Posterior cingulate gyrus (tissue), 11 donors: ENCODE measurements at regions of chr9 and their contacts with region 1.

Region 1: DNA sequence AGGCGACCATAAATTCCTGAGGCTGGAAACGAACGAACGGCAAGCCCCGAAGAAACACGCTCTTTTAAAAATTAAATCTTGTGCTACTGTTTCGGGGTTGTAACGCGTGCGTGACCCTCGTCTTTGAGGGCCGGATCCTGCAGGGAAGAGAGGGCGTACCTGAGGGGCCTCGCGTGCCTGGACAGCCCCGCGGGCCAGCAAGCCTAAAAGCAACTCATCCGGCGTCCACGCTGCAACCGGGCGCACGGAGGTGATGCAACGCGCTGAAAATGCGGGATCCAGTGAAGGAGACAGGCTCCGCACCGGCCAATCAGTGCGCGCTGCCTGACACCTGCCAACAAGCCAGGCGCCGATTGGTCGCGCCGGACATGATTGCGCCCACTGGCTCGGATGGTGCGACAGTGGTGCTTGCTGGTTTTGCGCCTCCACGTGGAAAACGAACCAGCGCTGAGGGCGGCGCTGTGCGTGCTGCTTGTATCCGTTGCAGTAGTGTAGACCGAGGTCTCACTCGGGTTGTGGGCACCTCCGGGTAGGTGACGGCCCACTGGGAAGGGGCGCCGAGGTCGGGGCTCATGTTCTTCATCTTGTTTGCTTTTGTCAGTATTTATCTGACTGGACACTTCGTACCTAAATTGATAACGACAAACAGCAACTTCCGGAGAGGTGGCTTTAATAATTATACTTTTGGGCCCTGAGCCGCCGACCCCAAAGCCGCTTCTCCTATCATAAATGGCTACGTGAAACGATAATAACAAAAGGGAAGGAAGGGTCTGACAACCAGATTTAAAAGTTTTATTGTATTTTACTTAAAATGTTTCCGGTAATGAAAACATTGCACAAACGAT is at the start of gene IARS1:
- DNase-seq: peak; percentile 98 to 100 (median 100)

Region 2: DNA sequence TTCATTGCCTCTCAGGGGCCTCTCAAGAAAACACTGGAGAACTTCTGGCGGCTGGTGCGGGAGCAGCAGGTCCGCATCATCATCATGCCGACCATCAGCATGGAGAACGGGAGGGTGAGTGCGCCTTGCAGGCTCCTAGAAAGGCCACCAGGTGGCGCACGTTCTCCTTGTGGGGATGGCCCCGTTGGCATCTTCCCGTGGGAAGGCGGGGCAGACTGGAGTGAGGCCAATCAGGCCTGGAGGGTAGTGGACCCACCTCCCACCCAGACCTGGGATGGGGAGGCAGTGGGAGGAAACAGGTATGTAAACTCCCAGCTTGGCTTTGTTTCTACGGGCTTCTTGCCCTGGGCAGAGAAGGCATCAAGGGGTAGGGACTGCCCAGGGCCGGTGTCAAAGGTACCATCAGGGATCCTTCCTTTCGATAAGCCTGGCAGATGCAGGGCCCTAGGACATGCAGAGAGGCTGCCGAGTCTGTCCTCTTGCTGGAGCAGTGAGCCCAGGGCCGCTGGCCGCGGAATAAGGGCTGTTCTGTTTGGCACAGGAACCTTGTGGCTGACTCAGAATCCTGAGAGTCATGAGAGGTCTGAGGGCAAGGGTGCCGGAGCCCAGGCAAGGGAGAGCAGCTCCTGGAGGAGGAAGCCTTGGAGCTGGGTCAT is 159.6 kb before region 1 on chr9:
- intact Hi-C with region 1: loop called (anchors 10 kb)
- DNase-seq: peak; percentile 66 to 97 (median 84)

Region 3: GRCh38 chr9:92206488-92206887 is 87.2 kb before region 1 on chr9:
- intact Hi-C with region 1: no loop called
- DNase-seq: no peak

Region 4: DNA sequence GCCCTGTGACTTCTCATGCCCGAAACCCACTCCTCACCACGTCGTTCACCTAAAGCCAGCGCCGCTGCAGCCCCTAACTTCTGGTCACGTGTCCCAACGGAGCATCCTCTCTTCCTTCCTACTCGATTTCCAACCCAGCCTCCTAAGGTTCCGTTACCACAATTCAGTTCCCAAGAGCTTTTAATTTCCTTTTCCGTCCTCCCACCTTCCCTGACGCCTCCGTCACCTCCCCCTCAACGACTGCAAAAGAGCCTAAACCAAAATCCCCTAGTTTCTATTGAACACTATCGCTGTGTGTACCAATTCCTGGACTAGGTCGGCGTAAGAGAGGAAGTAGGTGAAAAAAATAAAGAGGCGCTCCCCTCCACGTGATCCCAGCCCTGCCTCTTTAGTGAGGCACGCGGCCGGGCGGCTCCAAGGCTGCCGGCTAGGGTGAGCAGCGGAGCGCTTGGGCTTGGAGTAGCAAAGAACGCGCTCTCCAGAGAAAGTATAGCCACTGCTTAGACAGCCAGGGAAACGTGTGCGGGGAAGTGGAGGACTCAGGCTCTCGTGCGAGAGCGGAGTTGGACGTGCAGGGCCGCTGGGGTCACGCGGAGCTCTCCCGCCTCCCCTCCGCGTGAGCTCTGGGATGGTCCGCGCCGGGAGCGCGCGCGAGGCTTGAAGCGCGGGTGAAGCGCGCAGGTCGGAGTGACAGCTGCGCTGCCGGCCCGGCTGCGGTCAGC is 31.8 kb after region 1 on chr9 and contains the starts of genes CENPP and NOL8:
- intact Hi-C with region 1: loop called (anchors 1 kb)
- DNase-seq: peak; percentile 77 to 97 (median 84)

Region 5: GRCh38 chr9:92538541-92538940 is 244.9 kb after region 1 on chr9:
- intact Hi-C with region 1: no loop called
- DNase-seq: no peak